ENCODE measurements at regions of chr17 and their contacts with region 1.

Region 1: GRCh38 chr17:31680126-31680525 is 178.9 kb downstream of the COPRS start:
- DNase-seq: peak; percentile 12
- H3K4me3 Mint-ChIP-seq: no peak overlapping the region
- H3K27ac Mint-ChIP-seq: no peak overlapping the region
- H3K4me1 Mint-ChIP-seq: peaks cover 16% of the 10 kb centered on the region
- H3K27me3 Mint-ChIP-seq: peaks cover 22% of the 10 kb centered on the region

Region 2: GRCh38 chr17:31549525-31550388 is 130.4 kb before region 1 on chr17:
- intact Hi-C with region 1: loop called (anchors 10 kb)
- DNase-seq: peak; percentile 87
- H3K4me3 Mint-ChIP-seq: peak overlapping the region; percentile 85
- H3K27ac Mint-ChIP-seq: peak overlapping the region; percentile 80
- H3K4me1 Mint-ChIP-seq: peaks cover 20% of the 10 kb centered on the region
- H3K27me3 Mint-ChIP-seq: peaks cover 15% of the 10 kb centered on the region

Measured in activated T-helper 2 cell treated with anti-CD3 and anti-CD28 coated beads, Interferon-gamma antibody, Interleukin-2, Interleukin-4, amounts not matched to agents 10 μg/mL and 5 μg/mL and 100 μg/mL, durations not matched to agents 14 hours and 24 hours and 36 hours (primary cell).